Activated CD4-positive, alpha-beta T cell treated with anti-CD3 and anti-CD28 coated beads, Interleukin-2, amount 10 ng/mL, durations not matched to agents 24 days and 14 days (primary cell): ENCODE measurements at regions of chr4 and their contacts with region 1.

Region 1: GRCh38 chr4:165569031-165569430 is 190.2 kb downstream of the CPE start:
- DNase-seq: no peak
- H3K4me3 Mint-ChIP-seq: no peak overlapping the region
- H3K27ac Mint-ChIP-seq: no peak overlapping the region
- H3K4me1 Mint-ChIP-seq: peaks cover 4% of the 10 kb centered on the region
- H3K27me3 Mint-ChIP-seq: no peaks in the 10 kb centered on the region

Region 2: GRCh38 chr4:165524532-165525190 is 44.4 kb before region 1 on chr4:
- intact Hi-C with region 1: no loop called
- DNase-seq: no peak
- H3K4me3 Mint-ChIP-seq: no peak overlapping the region
- H3K27ac Mint-ChIP-seq: no peak overlapping the region
- H3K4me1 Mint-ChIP-seq: no peaks in the 10 kb centered on the region
- H3K27me3 Mint-ChIP-seq: no peaks in the 10 kb centered on the region

Region 3: DNA sequence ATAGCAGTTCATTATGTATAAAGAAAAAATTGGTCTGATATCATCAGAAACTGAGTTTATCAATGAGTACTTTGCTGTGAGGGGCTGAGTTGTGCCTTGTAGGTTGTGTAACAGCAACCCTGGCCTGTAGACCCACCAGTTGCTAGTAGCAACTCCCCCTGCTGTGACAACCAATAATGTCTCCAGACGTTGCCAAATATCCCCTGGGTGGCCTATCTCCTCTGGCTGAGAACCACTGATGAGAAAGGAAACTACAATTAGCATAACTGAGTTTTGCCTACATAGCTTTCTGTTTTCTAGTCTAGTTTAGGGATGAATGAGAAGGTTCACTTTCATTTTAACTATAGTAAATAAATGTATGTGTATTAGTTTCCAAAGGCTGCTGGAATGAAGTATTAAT is 43.9 kb after region 1 on chr4:
- intact Hi-C with region 1: loop called (anchors 5 kb)
- DNase-seq: peak; percentile 66
- H3K4me3 Mint-ChIP-seq: no peak overlapping the region
- H3K27ac Mint-ChIP-seq: peak overlapping the region; percentile 3
- H3K4me1 Mint-ChIP-seq: peaks cover 17% of the 10 kb centered on the region
- H3K27me3 Mint-ChIP-seq: peaks cover 4% of the 10 kb centered on the region